ENCODE measurements at regions of chr2 and their contacts with region 1.

Region 1: DNA sequence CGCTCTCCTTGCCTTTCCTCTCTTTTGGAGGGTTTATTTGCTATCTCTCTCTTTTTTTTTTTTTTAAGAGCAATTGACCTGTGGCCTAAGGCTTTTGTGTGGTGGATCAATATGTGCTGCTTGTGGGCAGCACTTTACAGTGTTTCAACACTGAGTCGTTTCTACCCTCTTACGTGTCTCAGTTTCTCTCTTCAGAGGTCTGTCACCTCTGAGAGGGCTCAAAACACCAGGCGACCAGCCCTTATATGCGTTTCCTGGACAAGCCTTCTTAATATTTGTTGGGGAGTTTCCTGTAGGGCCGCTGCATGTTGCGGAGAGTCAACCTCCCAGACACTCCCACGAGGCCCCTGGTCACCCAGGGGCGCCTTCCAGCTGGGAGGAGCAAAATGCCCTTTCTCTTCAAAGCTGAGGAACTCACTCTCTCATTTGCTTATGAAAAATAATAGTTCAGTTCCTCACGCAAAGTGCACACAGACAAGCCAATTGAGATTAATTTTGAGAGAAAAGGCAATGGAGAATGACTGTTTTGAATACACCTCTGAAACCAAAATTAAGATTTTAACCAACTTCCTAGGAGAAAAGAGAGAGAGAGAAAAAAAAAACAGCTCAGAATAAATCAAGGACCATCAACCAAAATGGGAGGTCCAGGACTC is 96.3 kb upstream of the B3GNT2 start:
- DNase-seq: peak; percentile 25
- ATAC-seq: peak; percentile 84
- H3K4me3 Mint-ChIP-seq: peak overlapping the region; percentile 73
- H3K27ac Mint-ChIP-seq: peak overlapping the region; percentile 86
- H3K4me1 Mint-ChIP-seq: peaks cover 36% of the 10 kb centered on the region
- H3K27me3 Mint-ChIP-seq: no peaks in the 10 kb centered on the region
- CTCF ChIP-seq: no peak

Region 2: GRCh38 chr2:62071126-62071598 is 28.5 kb before region 1 on chr2:
- CTCF ChIA-PET with region 1: no interaction called
- POLR2A ChIA-PET with region 1: interaction called, 4 read pairs
- intact Hi-C with region 1: loop called (anchors 1 kb)
- DNase-seq: no peak
- ATAC-seq: no peak
- H3K4me3 Mint-ChIP-seq: no peak overlapping the region
- H3K27ac Mint-ChIP-seq: no peak overlapping the region
- H3K4me1 Mint-ChIP-seq: peaks cover 3% of the 10 kb centered on the region
- H3K27me3 Mint-ChIP-seq: no peaks in the 10 kb centered on the region
- CTCF ChIP-seq: no peak

Region 3: GRCh38 chr2:62145478-62146100 is 45.9 kb after region 1 on chr2:
- CTCF ChIA-PET with region 1: no interaction called
- POLR2A ChIA-PET with region 1: no interaction called
- intact Hi-C with region 1: loop called (anchors 1 kb)
- DNase-seq: no peak
- ATAC-seq: peak; percentile 51
- H3K4me3 Mint-ChIP-seq: peak overlapping the region; percentile 28
- H3K27ac Mint-ChIP-seq: peak overlapping the region; percentile 57
- H3K4me1 Mint-ChIP-seq: peaks cover 53% of the 10 kb centered on the region
- H3K27me3 Mint-ChIP-seq: no peaks in the 10 kb centered on the region
- CTCF ChIP-seq: no peak

Region 4: DNA sequence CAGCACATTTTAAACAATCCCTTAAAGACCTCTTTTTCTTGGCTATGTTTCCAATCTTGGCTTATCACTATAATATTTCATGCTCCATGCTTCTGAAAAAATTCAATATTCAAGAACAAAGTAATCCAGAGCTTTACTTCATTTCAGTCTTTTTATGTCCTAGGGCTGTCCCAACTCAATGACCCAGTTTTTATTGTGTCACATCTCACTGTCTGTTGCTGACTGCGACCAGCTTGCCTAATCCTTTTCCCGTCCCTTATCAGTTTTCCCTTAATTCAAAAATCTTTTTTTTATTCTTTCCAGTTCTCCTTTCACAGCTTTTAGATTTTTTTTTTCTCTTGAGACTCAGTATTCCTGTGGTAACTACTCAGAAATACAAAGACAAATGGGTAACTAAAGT is 396.1 kb after region 1 on chr2:
- CTCF ChIA-PET with region 1: no interaction called
- POLR2A ChIA-PET with region 1: no interaction called
- intact Hi-C with region 1: loop called (anchors 5 kb)
- DNase-seq: no peak
- ATAC-seq: no peak
- H3K4me3 Mint-ChIP-seq: no peak overlapping the region
- H3K27ac Mint-ChIP-seq: no peak overlapping the region
- H3K4me1 Mint-ChIP-seq: no peaks in the 10 kb centered on the region
- H3K27me3 Mint-ChIP-seq: no peaks in the 10 kb centered on the region
- CTCF ChIP-seq: no peak